CD8-positive, alpha-beta T cell (primary cell): ENCODE measurements at regions of chr16 and their contacts with region 1.

Region 1: GRCh38 chr16:89828199-89828778 is at the start of gene SPIRE2:
- DNase-seq: peak; percentile 48 to 88 (median 72)
- ATAC-seq: peak; percentile 97
- H3K4me3 ChIP-seq: no peak within 1 kb of the TSS
- H3K4me3 Mint-ChIP-seq: peak within 1 kb of the TSS; percentile 61
- H3K27ac ChIP-seq: no peak within 1 kb of the TSS
- H3K27ac Mint-ChIP-seq: no peak within 1 kb of the TSS
- H3K4me1 ChIP-seq: peaks cover 11% of the 10 kb centered on the region
- H3K4me1 Mint-ChIP-seq: peaks cover 8% of the 10 kb centered on the region
- H3K27me3 ChIP-seq: peaks cover 4 to 14% of the 10 kb centered on the region in 2 experiments
- H3K27me3 Mint-ChIP-seq: peaks cover 23% of the 10 kb centered on the region
- CTCF ChIP-seq: no peak
- total RNA-seq, gene SPIRE2: 0.76 TPM in 1 of 2 experiments, not detected in the other

Region 2: GRCh38 chr16:89921699-89922476 is 93.6 kb after region 1 on chr16:
- CTCF ChIA-PET with region 1: no interaction called
- POLR2A ChIA-PET with region 1: no interaction called
- intact Hi-C with region 1: loop called (anchors 1 to 2 kb)
- DNase-seq: no peak
- ATAC-seq: no peak
- H3K4me3 ChIP-seq: no peak overlapping the region
- H3K4me3 Mint-ChIP-seq: peak overlapping the region; percentile 47
- H3K27ac ChIP-seq: no peak overlapping the region
- H3K27ac Mint-ChIP-seq: no peak overlapping the region
- H3K4me1 ChIP-seq: peaks cover 57% of the 10 kb centered on the region
- H3K4me1 Mint-ChIP-seq: peaks cover 47% of the 10 kb centered on the region
- H3K27me3 ChIP-seq: peaks cover 22 to 53% of the 10 kb centered on the region in 2 experiments
- H3K27me3 Mint-ChIP-seq: peaks cover 30% of the 10 kb centered on the region
- CTCF ChIP-seq: no peak

Region 3: GRCh38 chr16:89999831-90000574 is 171.7 kb after region 1 on chr16:
- CTCF ChIA-PET with region 1: no interaction called
- POLR2A ChIA-PET with region 1: no interaction called
- intact Hi-C with region 1: no loop called
- DNase-seq: no peak
- ATAC-seq: no peak
- H3K4me3 ChIP-seq: no peak overlapping the region
- H3K4me3 Mint-ChIP-seq: no peak overlapping the region
- H3K27ac ChIP-seq: no peak overlapping the region
- H3K27ac Mint-ChIP-seq: no peak overlapping the region
- H3K4me1 ChIP-seq: no peaks in the 10 kb centered on the region
- H3K4me1 Mint-ChIP-seq: no peaks in the 10 kb centered on the region
- H3K27me3 ChIP-seq: no peaks in the 10 kb centered on the region
- H3K27me3 Mint-ChIP-seq: no peaks in the 10 kb centered on the region
- CTCF ChIP-seq: no peak